Common myeloid progenitor, CD34-positive (primary cell): ENCODE measurements at regions of chr12 and their contacts with region 1.

Region 1: DNA sequence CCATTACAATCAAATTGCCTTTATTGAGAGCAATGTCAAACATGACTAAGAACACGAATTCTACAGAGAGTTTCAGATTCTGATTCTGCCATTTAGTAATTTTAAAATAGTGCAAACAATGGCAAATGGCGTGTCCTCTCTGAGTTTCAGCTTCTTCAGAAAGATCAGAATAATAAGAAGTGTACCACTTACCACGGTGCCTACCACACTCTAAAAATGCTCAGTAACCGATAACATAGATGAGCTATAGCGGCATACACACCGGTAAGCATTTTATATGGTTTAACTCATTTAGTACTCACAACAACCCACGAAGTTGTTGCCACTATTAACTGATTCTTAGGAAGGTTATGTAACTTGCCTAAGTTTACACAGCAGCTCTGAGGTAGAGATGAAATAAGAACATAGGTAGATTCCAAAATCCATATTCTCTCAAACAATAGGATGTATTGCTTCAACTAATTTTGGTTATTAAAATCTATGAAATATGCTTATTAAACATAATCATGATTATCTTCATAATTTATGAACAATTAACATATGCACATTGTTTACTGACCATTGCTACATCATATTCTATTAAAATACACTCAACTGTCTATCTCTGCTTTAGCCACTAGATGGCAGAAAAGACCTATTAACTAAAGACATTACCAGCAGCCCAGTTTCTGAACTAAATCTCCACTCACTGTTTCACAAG is 38.3 kb downstream of the SLC6A15 start:
- DNase-seq: peak; percentile 36 to 69 (median 56)
- H3K4me3 ChIP-seq: no peak overlapping the region
- H3K27ac ChIP-seq: no peak overlapping the region
- H3K4me1 ChIP-seq: no peaks in the 10 kb centered on the region
- H3K27me3 ChIP-seq: peaks cover 0 to 10% (median 5%) of the 10 kb centered on the region in 5 experiments

Region 2: GRCh38 chr12:84814664-84815245 is 59.5 kb before region 1 on chr12:
- CTCF ChIA-PET with region 1: no interaction called
- POLR2A ChIA-PET with region 1: no interaction called
- DNase-seq: no peak
- H3K4me3 ChIP-seq: no peak overlapping the region
- H3K27ac ChIP-seq: no peak overlapping the region
- H3K4me1 ChIP-seq: no peaks in the 10 kb centered on the region
- H3K27me3 ChIP-seq: no peaks in the 10 kb centered on the region

Region 3: DNA sequence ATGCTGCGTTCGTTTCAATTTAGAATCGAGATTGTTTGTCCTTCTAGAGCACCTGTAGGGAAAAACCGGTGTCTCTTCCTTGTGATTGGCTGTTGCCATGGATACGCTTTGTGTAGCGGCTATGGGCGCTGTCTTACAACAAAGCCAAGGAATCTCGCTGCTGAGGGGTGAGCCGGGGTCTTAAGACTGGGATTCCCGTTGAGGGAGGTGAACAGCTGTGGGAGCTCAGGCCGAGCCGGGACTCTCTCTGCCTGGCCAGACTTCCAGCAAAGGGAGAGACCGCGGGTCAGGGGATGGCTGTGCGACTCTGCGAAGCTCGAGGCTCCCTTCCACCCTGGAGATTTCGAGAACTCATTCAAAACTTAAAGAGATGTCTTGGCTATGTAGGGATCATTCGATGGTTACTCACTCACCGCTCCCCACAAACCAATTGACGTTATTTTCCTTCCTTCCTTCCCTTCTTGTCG is 162.0 kb after region 1 on chr12 and contains the starts of genes LRRIQ1 and TSPAN19:
- CTCF ChIA-PET with region 1: interaction called, 135 read pairs
- POLR2A ChIA-PET with region 1: no interaction called
- DNase-seq: peak; percentile 34 to 58 (median 46)
- H3K4me3 ChIP-seq: peak within 1 kb of the TSS in 5 of 7 experiments; percentile 27 to 50 (median 47)
- H3K27ac ChIP-seq: no peak within 1 kb of the TSS
- H3K4me1 ChIP-seq: peaks cover 0 to 3% (median 1%) of the 10 kb centered on the region in 4 experiments
- H3K27me3 ChIP-seq: peaks cover 7 to 78% (median 18%) of the 10 kb centered on the region in 5 experiments